Activated T-helper 2 cell treated with anti-CD3 and anti-CD28 coated beads, Interferon-gamma antibody, Interleukin-2, Interleukin-4, amounts not matched to agents 10 μg/mL and 5 μg/mL and 100 μg/mL, durations not matched to agents 14 hours and 24 hours and 36 hours (primary cell): ENCODE measurements at regions of chr1 and their contacts with region 1.

Region 1: GRCh38 chr1:225428068-225428880 is 436 bp upstream of the LBR start:
- DNase-seq: peak; percentile 92
- H3K4me3 Mint-ChIP-seq: peak overlapping the region; percentile 74
- H3K27ac Mint-ChIP-seq: peak overlapping the region; percentile 94
- H3K4me1 Mint-ChIP-seq: peaks cover 40% of the 10 kb centered on the region
- H3K27me3 Mint-ChIP-seq: no peaks in the 10 kb centered on the region

Region 2: DNA sequence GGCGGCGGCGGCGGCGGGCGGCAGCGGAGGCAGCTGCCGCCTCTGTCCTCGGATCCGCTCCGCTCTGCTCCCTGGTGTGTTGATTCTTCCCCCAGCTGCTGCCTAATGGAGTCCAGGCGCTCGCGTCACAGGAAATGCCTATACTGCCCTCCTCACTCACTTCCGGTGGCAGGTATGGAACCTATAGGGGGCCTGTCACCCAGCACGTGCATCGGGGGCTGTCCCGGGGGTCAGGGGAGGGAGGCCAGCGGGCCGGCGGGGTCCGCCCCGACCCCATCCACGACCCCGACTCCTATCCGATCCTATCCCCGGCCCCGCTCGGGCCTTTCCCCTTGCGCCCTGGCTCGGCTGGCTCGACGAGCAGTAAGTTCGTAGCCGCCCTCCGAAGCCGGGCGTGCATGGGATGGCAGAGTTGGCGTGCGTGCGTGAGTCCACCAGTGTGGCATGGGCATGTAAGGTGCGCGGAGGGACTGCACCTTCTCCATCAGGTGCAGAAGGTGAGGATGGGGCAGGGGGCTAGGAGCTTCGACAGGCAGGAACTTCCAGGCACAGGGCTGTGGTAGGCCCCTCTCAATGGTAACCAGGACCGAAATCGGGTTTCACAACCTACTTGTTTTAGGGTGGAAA is 993.5 kb before region 1 on chr1 and contains the start of gene WDR26:
- intact Hi-C with region 1: loop called (anchors 10 kb)
- DNase-seq: peak; percentile 83
- H3K4me3 Mint-ChIP-seq: peak within 1 kb of the TSS; percentile 90
- H3K27ac Mint-ChIP-seq: peak within 1 kb of the TSS; percentile 92
- H3K4me1 Mint-ChIP-seq: peaks cover 44% of the 10 kb centered on the region
- H3K27me3 Mint-ChIP-seq: no peaks in the 10 kb centered on the region
- total RNA-seq, gene WDR26: 80.5 and 82.0 TPM in 2 replicates

Region 3: GRCh38 chr1:225445644-225446594 is 17.6 kb after region 1 on chr1:
- intact Hi-C with region 1: loop called (anchors 1 kb)
- DNase-seq: no peak
- H3K4me3 Mint-ChIP-seq: peak overlapping the region; percentile 57
- H3K27ac Mint-ChIP-seq: peak overlapping the region; percentile 92
- H3K4me1 Mint-ChIP-seq: peaks cover 59% of the 10 kb centered on the region
- H3K27me3 Mint-ChIP-seq: no peaks in the 10 kb centered on the region

Region 4: GRCh38 chr1:225467193-225468020 is 39.1 kb after region 1 on chr1:
- intact Hi-C with region 1: loop called (anchors 1 kb)
- DNase-seq: peak; percentile 83
- H3K4me3 Mint-ChIP-seq: peak overlapping the region; percentile 89
- H3K27ac Mint-ChIP-seq: peak overlapping the region; percentile 99
- H3K4me1 Mint-ChIP-seq: peaks cover 41% of the 10 kb centered on the region
- H3K27me3 Mint-ChIP-seq: no peaks in the 10 kb centered on the region

Region 5: DNA sequence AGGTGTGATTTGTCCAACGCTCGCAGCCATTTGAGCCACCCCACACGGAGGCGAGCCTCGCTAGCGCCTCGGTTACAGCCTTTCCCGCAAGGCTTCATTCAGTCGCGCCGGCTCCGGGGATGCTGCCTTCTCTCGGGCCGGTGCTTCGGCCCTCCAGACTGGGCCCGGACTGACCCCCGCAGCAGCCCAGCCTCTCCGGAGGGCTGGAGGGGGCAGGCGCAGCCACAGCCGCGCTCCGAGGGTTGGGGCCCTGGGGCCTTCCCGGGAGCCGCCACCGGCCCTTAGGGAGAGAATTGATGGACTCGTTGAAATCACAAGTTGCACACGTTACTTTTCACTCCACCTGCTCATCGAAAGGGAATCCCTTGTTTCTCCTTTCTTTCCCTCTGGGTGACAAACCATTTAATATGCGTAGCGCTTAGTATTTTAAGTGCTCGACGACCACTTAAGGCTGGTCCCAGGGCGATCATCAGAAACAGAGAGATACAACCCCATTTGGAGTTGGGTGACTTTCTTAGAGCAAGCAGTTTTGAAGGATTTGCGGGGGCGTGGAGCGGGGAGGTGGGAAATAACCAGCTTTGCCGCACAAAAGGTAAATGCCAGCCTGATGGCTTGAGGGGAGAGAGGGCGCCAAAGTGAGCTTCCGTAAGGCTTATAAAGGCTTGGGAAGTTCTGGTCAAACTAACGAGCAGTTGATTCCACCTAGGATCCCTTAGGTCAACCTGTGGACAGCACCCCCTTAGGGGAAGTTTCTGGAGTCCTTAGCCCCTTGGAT is 249.3 kb after region 1 on chr1:
- intact Hi-C with region 1: no loop called
- DNase-seq: no peak
- H3K4me3 Mint-ChIP-seq: no peak overlapping the region
- H3K27ac Mint-ChIP-seq: no peak overlapping the region
- H3K4me1 Mint-ChIP-seq: no peaks in the 10 kb centered on the region
- H3K27me3 Mint-ChIP-seq: peaks cover 41% of the 10 kb centered on the region